CD8-positive, alpha-beta T cell (primary cell): ENCODE measurements at regions of chr13 and their contacts with region 1.

Region 1: DNA sequence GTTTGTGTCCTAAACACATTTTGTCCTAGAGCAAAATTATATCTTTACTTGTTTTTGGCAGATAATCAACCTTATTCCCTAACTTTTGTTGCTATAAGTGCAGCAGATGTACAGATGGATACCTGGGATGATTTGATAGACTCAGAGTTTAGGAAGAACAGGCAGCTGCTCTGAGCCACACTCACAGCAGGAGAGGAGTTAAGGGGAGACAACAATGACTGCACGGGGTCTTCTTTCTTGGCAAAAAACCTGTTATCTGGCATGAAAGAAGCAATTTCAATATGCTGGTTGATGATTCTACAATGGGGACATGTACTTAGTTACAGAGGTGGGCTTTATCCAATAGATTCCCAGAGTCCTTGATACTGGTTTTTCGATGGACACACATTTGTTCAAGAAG is 258.9 kb upstream of the PCDH9 start:
- DNase-seq: no peak
- ATAC-seq: no peak
- H3K4me3 ChIP-seq: no peak overlapping the region
- H3K4me3 Mint-ChIP-seq: no peak overlapping the region
- H3K27ac ChIP-seq: no peak overlapping the region
- H3K27ac Mint-ChIP-seq: no peak overlapping the region
- H3K4me1 ChIP-seq: no peaks in the 10 kb centered on the region
- H3K4me1 Mint-ChIP-seq: no peaks in the 10 kb centered on the region
- H3K27me3 ChIP-seq: no peaks in the 10 kb centered on the region
- H3K27me3 Mint-ChIP-seq: no peaks in the 10 kb centered on the region
- CTCF ChIP-seq: no peak

Region 2: DNA sequence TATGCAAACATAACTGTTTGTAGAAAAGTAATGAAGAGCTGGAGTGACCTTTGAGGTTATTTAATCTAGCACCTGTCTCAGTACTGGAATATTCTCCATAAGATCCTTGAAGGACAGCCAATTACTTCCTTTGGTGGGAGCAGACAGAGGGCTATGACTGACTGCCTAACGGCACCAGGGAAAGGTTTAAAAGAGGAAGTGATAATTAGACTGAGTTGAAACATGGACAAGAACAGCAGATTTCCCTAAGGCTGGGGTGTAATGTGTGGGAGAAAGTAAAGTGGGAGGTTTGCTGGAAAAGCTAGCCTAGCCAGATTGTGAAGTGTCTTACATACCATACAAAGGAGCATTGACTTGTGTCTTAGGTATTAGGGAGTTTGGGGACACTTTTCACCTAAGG is 67.5 kb before region 1 on chr13:
- CTCF ChIA-PET with region 1: no interaction called
- POLR2A ChIA-PET with region 1: no interaction called
- intact Hi-C with region 1: loop called in 1 of 2 experiments (anchors 10 kb)
- DNase-seq: no peak
- ATAC-seq: no peak
- H3K4me3 ChIP-seq: no peak overlapping the region
- H3K4me3 Mint-ChIP-seq: no peak overlapping the region
- H3K27ac ChIP-seq: no peak overlapping the region
- H3K27ac Mint-ChIP-seq: no peak overlapping the region
- H3K4me1 ChIP-seq: no peaks in the 10 kb centered on the region
- H3K4me1 Mint-ChIP-seq: no peaks in the 10 kb centered on the region
- H3K27me3 ChIP-seq: no peaks in the 10 kb centered on the region
- H3K27me3 Mint-ChIP-seq: no peaks in the 10 kb centered on the region
- CTCF ChIP-seq: no peak

Region 3: DNA sequence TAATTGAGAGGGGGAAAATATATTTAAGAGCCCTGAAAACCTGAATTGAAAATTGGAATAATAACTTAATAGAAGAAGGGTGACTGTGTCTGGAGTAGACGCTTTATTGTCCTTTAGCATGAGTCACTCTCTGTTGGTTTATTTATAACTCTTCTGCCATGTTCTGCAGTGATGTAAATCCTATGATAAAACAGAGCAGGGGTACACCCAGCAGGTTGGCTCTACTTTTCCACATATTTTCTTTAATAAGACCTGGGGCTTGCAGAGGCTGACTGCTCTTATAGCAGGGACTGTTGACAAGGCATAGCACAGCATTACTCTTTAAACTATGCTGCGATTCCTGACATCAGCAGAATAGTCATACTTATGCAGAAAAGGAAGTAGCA is 131.0 kb after region 1 on chr13:
- CTCF ChIA-PET with region 1: no interaction called
- POLR2A ChIA-PET with region 1: no interaction called
- intact Hi-C with region 1: no loop called
- DNase-seq: no peak
- ATAC-seq: no peak
- H3K4me3 ChIP-seq: no peak overlapping the region
- H3K4me3 Mint-ChIP-seq: no peak overlapping the region
- H3K27ac ChIP-seq: no peak overlapping the region
- H3K27ac Mint-ChIP-seq: no peak overlapping the region
- H3K4me1 ChIP-seq: no peaks in the 10 kb centered on the region
- H3K4me1 Mint-ChIP-seq: no peaks in the 10 kb centered on the region
- H3K27me3 ChIP-seq: no peaks in the 10 kb centered on the region
- H3K27me3 Mint-ChIP-seq: no peaks in the 10 kb centered on the region
- CTCF ChIP-seq: no peak